ENCODE measurements at regions of chr11 and their contacts with region 1.

Region 1: DNA sequence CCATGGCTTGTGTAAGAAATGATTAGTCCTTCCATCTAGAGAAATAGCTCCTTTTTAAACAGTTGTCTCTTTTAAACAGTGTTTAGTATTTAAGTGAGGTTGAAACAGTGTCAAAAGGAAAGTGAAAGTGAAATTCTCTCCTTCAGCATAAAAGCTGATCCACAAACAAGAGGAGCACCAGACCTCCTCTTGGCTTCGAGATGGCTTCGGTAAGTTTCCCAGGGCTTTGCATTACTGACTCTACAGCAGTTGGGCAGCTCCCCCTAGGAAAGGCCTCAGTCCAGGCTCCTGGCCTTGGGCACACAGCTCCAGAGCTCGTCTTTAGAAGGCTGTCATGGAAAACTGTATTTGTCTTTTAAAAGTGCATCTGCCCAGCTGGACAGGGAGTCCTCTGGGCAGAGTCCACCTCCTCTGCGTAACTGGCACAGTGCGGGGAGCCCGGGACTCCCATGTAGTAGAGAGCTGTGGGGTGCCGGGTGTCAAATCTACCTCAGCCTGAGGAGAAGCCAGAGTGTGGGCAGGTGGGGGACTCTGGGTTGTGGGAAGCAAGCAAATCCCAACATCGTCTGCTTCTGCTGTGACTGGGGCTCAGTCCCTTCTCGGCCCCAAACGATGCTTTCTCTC is at the start of gene PLAAT4:
- DNase-seq: peak; percentile 45
- ATAC-seq: peak; percentile 62
- H3K4me3 ChIP-seq: peak within 1 kb of the TSS; percentile 70
- H3K27ac ChIP-seq: peak within 1 kb of the TSS; percentile 47
- H3K4me1 ChIP-seq: peaks cover 32% of the 10 kb centered on the region
- H3K27me3 ChIP-seq: no peaks in the 10 kb centered on the region
- CTCF ChIP-seq: no peak
- EP300 ChIP-seq: no peak
- POLR2A ChIP-seq: no peak
- RAD21 ChIP-seq: no peak
- polyA plus RNA-seq, gene PLAAT4: 23.7 to 34.3 TPM

Region 2: DNA sequence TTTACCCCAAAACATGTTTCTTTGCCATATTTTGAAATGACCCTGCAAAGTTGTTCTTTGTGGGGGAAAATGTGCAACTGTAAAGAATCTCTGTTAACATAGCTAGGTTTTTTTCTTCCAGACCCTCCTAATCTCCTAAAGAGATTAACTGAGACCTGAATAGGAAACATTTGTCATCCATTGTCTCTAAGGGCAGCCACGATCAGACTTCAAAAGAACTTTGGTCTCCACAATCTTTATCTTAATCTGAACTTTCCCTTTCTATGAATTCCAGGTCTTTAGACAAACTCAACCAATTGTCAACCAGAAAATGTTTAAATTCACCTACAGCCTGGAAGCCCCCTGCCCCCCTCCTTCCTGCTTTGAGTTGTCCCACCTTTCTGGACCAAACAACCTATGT is 35.5 kb before region 1 on chr11:
- CTCF ChIA-PET with region 1: no interaction called
- POLR2A ChIA-PET with region 1: no interaction called
- RAD21 ChIA-PET with region 1: no interaction called
- SMC1A ChIA-PET with region 1: no interaction called
- in situ Hi-C with region 1: no loop called
- intact Hi-C with region 1: no loop called
- DNase-seq: no peak
- ATAC-seq: no peak
- H3K4me3 ChIP-seq: no peak overlapping the region
- H3K27ac ChIP-seq: no peak overlapping the region
- H3K4me1 ChIP-seq: peaks cover 5% of the 10 kb centered on the region; the same call in 1 of the 2 replicates
- H3K27me3 ChIP-seq: no peaks in the 10 kb centered on the region
- CTCF ChIP-seq: no peak
- EP300 ChIP-seq: no peak
- POLR2A ChIP-seq: no peak
- RAD21 ChIP-seq: no peak

Region 3: DNA sequence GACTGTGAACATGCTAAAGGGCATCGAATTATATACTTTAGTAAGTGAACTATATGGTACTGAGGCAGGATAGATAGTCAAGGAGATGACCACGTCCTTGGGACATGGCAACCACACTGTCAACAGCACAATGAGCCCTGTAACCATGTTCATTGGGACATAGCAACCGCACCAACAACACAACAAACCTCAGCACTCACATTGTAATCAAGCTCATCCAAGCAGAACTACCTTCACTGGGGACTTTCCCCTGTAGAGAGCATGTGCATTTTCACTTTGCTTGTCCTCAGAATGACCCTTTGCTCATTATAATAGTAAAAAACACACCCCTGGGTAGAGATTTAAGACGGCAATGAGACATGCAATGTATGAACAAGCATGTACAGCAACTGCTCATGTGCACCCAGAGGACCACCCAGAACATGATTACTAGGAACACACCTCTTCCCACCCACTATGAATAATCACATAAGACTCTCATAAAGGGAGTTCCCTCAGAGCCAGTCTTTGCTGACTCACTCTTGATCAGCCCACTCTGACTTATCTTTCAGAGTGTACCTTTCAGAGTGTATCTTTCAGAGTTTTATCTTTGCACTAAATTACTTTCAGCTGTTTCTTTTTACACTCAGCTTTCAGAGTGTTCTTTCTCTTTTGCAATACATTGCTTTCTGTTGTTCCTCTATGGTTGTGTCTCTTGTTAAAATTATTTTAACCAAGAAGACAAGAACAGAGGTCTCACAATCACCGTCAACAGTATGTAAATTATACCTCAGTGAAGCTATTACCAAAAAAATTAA is 30.5 kb after region 1 on chr11:
- CTCF ChIA-PET with region 1: no interaction called
- POLR2A ChIA-PET with region 1: interaction called, 9 read pairs
- RAD21 ChIA-PET with region 1: interaction called, 10 read pairs
- SMC1A ChIA-PET with region 1: interaction called, 8 read pairs
- in situ Hi-C with region 1: no loop called
- intact Hi-C with region 1: loop called (anchors 1 kb)
- DNase-seq: peak; percentile 95
- ATAC-seq: peak; percentile 87
- H3K4me3 ChIP-seq: peak overlapping the region; percentile 28; the same call in 1 of the 2 replicates
- H3K27ac ChIP-seq: peak overlapping the region; percentile 72
- H3K4me1 ChIP-seq: peaks cover 56% of the 10 kb centered on the region
- H3K27me3 ChIP-seq: no peaks in the 10 kb centered on the region
- CTCF ChIP-seq: no peak
- EP300 ChIP-seq: peak; percentile 92 to 99
- POLR2A ChIP-seq: no peak
- RAD21 ChIP-seq: no peak

Measured in GM12878 (cell line).